Esophagus muscularis mucosa (tissue), 4 donors: ENCODE measurements at regions of chr11 and their contacts with region 1.

Region 1: DNA sequence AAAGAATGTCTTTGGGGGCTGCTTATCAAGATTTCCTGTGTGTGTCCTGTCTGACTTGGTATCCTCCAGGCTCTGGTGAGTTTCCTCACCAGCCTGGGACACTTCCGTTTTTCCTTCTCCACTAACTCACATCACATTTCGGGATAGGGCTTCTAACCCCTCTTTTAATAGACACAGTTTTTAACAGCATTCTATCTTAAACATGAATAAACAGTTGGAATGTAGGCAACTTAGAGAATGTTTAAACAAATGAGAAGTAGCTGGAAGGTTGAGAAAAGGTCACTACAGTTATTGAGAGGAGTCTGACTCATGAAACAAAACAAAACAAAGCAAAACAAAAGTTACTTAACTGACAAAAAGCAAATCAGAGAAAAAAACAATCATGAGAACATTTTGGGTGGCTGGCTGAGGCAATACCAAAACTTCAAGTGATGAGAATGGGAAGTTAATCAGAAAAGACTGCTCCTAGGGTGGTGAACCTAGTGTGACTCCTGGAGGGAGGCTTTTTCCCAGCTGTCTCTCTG is 64.7 kb upstream of the CTSC start:
- DNase-seq: no peak
- H3K4me3 ChIP-seq: peak overlapping the region in 1 of 4 donors; percentile 8
- H3K27ac ChIP-seq: peak overlapping the region; percentile 2 to 45 (median 6)
- H3K4me1 ChIP-seq: peaks cover 11 to 22% (median 17%) of the 10 kb centered on the region in 4 donors
- H3K27me3 ChIP-seq: no peaks in the 10 kb centered on the region
- CTCF ChIP-seq: no peak
- EP300 ChIP-seq: no peak
- POLR2A ChIP-seq: no peak

Region 2: GRCh38 chr11:88337181-88337986 is 64.9 kb before region 1 on chr11 and contains the start of gene CTSC:
- intact Hi-C with region 1: loop called (anchors 5 kb)
- DNase-seq: peak; percentile 97
- H3K4me3 ChIP-seq: peak within 1 kb of the TSS; percentile 69 to 86 (median 76)
- H3K27ac ChIP-seq: peak within 1 kb of the TSS; percentile 75 to 87 (median 77)
- H3K4me1 ChIP-seq: peaks cover 3 to 15% (median 11%) of the 10 kb centered on the region in 4 donors
- H3K27me3 ChIP-seq: no peaks in the 10 kb centered on the region
- CTCF ChIP-seq: peak in 1 of 3 experiments; percentile 12
- EP300 ChIP-seq: no peak
- POLR2A ChIP-seq: peak; percentile 32
- total RNA-seq, gene CTSC: 22.1 to 59.0 (median 24.9) TPM